ENCODE measurements at regions of chr19 and their contacts with region 1.

Region 1: DNA sequence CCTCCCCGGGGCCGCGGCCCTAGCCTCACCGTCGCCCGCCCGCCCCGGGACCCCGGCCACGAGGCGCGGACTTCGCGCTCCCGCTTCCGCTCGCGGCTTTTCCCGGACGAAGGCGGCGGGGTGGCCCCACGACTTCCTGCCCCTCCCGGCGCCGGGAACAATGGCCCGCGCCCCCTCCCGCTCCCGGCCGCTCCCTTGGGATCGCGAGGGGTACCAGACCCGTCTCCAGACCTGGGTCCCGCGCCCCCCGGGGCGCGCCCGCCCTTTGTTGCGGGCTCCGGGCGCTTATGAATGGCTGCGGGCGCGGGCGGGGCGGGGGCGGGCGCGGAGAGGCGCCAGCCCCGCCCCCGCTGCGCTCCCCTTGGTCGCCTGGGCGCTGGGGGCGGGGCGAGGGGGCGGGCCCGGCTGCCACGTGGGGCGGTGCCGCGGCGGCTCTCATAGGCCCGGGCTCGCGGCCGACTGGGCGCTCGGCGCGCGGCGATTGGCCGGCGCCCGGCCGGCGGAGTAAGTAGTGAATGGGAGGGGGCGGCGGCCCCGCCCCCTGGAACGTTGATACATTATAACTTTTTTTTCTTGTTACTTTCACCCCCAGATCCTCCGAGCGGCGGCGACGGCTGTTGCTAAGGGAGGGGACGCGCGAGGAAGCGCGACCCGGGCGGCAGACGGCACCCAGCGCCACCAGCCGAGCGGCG is 1.1 kb downstream of the MIDN start:
- DNase-seq: peak; percentile 96
- H3K4me3 Mint-ChIP-seq: peak overlapping the region; percentile 75
- H3K27ac Mint-ChIP-seq: peak overlapping the region; percentile 78
- H3K4me1 Mint-ChIP-seq: peaks cover 10% of the 10 kb centered on the region
- H3K27me3 Mint-ChIP-seq: no peaks in the 10 kb centered on the region

Region 2: GRCh38 chr19:372306-372890 is 877.0 kb before region 1 on chr19:
- CTCF ChIA-PET with region 1: no interaction called
- intact Hi-C with region 1: no loop called
- DNase-seq: no peak
- H3K4me3 Mint-ChIP-seq: no peak overlapping the region
- H3K27ac Mint-ChIP-seq: no peak overlapping the region
- H3K4me1 Mint-ChIP-seq: no peaks in the 10 kb centered on the region
- H3K27me3 Mint-ChIP-seq: peaks cover 13% of the 10 kb centered on the region

Region 3: GRCh38 chr19:907183-907853 is 342.1 kb before region 1 on chr19:
- CTCF ChIA-PET with region 1: no interaction called
- intact Hi-C with region 1: loop called (anchors 5 kb)
- DNase-seq: peak; percentile 88
- H3K4me3 Mint-ChIP-seq: peak overlapping the region; percentile 41
- H3K27ac Mint-ChIP-seq: peak overlapping the region; percentile 97
- H3K4me1 Mint-ChIP-seq: peaks cover 72% of the 10 kb centered on the region
- H3K27me3 Mint-ChIP-seq: no peaks in the 10 kb centered on the region

Region 4: DNA sequence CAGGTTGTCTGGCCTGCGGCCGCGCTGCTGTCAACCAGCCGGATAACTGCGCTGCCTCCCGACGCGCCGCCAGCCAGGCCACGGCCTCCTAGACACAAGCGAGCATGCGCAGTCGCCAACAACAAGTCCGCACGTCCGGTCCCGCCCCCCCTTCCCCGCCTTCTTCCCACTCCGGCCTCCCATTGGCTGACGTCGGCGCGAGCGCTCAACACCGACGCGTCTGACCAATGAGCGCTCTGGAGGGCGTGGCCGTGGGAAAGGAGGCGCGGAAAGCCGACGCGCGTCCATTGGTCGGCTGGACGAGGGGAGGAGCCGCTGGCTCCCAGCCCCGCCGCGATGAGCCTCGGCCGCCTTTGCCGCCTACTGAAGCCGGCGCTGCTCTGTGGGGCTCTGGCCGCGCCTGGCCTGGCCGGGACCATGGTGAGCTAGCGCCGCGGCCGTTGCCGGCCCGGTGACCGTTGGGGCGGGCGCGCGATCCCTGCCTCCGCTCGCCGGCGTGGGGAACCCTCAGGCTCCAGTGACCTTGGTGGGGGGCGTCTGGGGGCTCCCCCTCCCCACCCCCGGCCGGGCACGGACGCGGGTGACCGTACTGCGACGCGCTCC is 145.6 kb before region 1 on chr19 and contains the start of gene GPX4:
- CTCF ChIA-PET with region 1: no interaction called
- intact Hi-C with region 1: loop called (anchors 2 kb)
- DNase-seq: peak; percentile 99
- H3K4me3 Mint-ChIP-seq: peak within 1 kb of the TSS; percentile 72
- H3K27ac Mint-ChIP-seq: peak within 1 kb of the TSS; percentile 79
- H3K4me1 Mint-ChIP-seq: peaks cover 54% of the 10 kb centered on the region
- H3K27me3 Mint-ChIP-seq: no peaks in the 10 kb centered on the region
- total RNA-seq, gene GPX4: 244 to 253 TPM

Region 5: GRCh38 chr19:1141944-1142343 is 107.5 kb before region 1 on chr19:
- CTCF ChIA-PET with region 1: no interaction called
- intact Hi-C with region 1: no loop called
- DNase-seq: no peak
- H3K4me3 Mint-ChIP-seq: no peak overlapping the region
- H3K27ac Mint-ChIP-seq: no peak overlapping the region
- H3K4me1 Mint-ChIP-seq: no peaks in the 10 kb centered on the region
- H3K27me3 Mint-ChIP-seq: no peaks in the 10 kb centered on the region

Region 6: DNA sequence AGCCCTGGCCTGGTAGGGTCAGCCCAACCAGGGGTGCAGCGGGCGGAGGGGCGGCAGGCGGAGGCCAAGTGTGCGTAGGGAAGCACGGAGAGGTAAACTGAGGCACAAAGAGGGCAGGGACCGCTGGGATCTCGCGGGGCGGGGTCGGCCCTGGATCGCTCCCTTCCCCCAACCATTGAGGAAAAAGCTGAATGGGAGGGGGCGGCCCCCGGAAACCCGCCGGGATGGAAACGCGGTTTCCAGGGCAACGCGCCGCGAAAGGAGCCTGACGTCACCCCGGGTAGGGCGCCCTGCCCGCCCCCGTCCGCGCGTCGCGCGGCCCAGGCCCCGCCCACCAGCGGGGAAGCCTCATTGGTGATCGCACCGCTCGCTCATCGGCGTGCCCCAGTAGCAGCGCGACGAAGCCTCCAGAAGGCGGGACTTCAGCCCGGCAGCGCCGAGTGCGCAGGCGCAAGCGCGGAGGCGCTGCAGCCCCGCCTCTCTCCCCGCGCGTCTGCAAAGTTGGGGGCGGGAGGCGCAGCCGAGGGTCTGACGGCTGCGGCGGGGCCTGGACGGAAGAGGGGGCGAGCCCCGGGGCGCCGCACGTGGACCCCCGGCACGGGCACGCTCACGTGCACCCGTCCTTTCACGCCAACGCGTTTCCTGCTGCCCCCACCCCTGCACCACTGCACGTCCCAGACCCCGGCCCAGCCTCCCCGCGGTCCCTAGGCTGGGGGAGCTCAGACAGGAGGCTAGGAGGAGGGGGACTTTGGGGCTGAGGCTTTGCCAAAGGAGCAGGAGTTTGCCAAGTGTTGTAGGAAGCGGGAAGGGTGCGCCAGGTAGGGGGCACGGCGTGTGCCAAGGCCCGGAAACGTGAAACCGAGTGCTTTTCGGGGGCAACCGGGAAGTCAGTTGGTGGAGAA is 11.4 kb after region 1 on chr19:
- CTCF ChIA-PET with region 1: interaction called, 233 read pairs
- intact Hi-C with region 1: loop called (anchors 1 kb)
- DNase-seq: peak; percentile 97
- H3K4me3 Mint-ChIP-seq: peak overlapping the region; percentile 92
- H3K27ac Mint-ChIP-seq: peak overlapping the region; percentile 97
- H3K4me1 Mint-ChIP-seq: peaks cover 50% of the 10 kb centered on the region
- H3K27me3 Mint-ChIP-seq: no peaks in the 10 kb centered on the region

Region 7: GRCh38 chr19:1269065-1269477 is 19.6 kb after region 1 on chr19 and contains the start of gene CIRBP:
- CTCF ChIA-PET with region 1: interaction called, 233 read pairs
- intact Hi-C with region 1: loop called (anchors 1 kb)
- DNase-seq: peak; percentile 99
- H3K4me3 Mint-ChIP-seq: peak within 1 kb of the TSS; percentile 87
- H3K27ac Mint-ChIP-seq: peak within 1 kb of the TSS; percentile 83
- H3K4me1 Mint-ChIP-seq: peaks cover 64% of the 10 kb centered on the region
- H3K27me3 Mint-ChIP-seq: no peaks in the 10 kb centered on the region
- total RNA-seq, gene CIRBP: 167 to 183 TPM

Region 8: GRCh38 chr19:1304197-1304924 is 54.9 kb after region 1 on chr19:
- CTCF ChIA-PET with region 1: no interaction called
- intact Hi-C with region 1: no loop called
- DNase-seq: no peak
- H3K4me3 Mint-ChIP-seq: no peak overlapping the region
- H3K27ac Mint-ChIP-seq: no peak overlapping the region
- H3K4me1 Mint-ChIP-seq: no peaks in the 10 kb centered on the region
- H3K27me3 Mint-ChIP-seq: no peaks in the 10 kb centered on the region